ENCODE measurements at regions of chr7 and their contacts with region 1.

Region 1: DNA sequence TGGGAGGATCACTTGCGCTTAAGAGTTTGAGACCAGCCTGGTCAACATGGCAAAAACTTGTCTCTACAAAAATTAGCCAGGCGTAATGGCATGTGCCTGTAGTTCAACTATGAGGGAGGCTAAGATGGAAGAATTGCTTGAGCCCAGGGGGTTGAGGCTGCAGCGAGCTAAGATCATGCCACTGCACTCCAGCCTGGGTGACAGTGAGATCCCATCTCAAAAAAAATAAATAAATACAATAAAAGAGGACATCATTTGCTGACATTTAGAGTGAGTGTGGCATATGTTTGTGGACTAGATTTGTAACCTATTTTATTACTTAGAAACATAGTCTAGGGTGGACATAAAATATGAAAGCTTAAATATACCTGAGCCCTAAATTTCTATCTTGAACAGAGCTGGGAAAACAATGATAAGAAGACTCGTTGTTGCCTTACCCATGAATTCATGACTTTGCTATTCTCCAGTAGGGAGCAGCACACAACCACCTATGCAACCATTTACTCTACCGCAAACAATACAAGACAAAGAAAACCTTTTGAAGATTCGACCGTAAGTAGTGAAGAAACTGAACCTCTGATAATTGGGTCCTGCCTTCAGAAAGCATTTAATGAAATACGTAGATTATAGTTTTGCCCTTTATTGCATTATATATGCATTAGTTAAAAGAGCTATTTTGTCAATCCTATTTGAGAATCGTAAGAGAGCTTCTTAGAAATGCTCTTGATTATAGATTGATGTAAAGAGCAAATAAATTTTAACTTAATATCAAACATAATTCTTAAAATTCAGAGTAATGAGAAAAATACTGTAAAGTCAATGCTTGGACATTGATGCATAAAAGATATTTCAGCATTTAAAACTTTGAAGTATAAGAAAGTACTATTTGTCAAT is 83.5 kb downstream of the GNAT3 start:
- DNase-seq: peak in 1 of 2 donors; percentile 47
- ATAC-seq: peak; percentile 65 to 95 (median 92)
- H3K4me3 ChIP-seq: peak overlapping the region in 2 of 10 donors; percentile 0 to 22
- H3K27ac ChIP-seq: no peak overlapping the region
- H3K4me1 ChIP-seq: peaks cover 0 to 10% (median 3%) of the 10 kb centered on the region in 9 donors
- H3K27me3 ChIP-seq: no peaks in the 10 kb centered on the region
- CTCF ChIP-seq: peak; percentile 44 to 90 (median 77)

Region 2: DNA sequence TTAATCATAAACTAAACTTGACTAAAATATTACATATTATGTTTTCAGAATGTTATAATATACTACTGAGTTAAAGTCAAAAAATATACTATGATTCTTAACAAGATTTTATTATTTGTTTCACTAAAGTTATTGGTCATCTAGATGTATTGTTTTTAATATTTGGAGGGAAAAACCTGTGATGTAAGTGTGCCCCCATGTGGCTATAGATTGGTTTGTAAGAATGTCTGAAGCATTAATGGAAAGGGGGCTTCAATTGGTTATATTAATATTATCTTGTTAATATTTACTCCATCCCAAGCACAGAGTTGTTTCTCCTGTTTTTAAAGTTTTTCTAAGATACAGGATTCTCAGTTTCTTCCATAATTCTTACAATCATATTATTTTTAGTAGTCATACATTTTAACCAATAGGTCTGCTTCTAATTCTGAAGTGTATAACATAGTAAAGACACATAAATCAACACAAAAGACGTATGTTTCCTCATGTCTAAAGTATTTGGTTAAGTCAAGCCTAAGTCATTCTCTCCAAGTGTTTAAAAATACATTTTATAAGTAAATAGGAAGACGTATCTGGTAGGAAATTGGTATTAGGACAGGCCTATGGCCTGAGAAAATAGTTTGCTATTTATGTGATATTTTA is 25.4 kb after region 1 on chr7:
- intact Hi-C with region 1: loop called in 1 of 10 experiments (anchors 2 kb)
- DNase-seq: no peak
- ATAC-seq: no peak
- H3K4me3 ChIP-seq: no peak overlapping the region
- H3K27ac ChIP-seq: no peak overlapping the region
- H3K4me1 ChIP-seq: peaks cover 0 to 5% (median 0%) of the 10 kb centered on the region in 9 donors
- H3K27me3 ChIP-seq: no peaks in the 10 kb centered on the region
- CTCF ChIP-seq: peak in 8 of 9 donors; percentile 27 to 75 (median 57)